Activated CD8-positive, alpha-beta T cell treated with anti-CD3 and anti-CD28 coated beads, Interleukin-2, amount 10 ng/mL, durations not matched to agents 7 days and 5 days (primary cell): ENCODE measurements at regions of chr3 and their contacts with region 1.

Region 1: DNA sequence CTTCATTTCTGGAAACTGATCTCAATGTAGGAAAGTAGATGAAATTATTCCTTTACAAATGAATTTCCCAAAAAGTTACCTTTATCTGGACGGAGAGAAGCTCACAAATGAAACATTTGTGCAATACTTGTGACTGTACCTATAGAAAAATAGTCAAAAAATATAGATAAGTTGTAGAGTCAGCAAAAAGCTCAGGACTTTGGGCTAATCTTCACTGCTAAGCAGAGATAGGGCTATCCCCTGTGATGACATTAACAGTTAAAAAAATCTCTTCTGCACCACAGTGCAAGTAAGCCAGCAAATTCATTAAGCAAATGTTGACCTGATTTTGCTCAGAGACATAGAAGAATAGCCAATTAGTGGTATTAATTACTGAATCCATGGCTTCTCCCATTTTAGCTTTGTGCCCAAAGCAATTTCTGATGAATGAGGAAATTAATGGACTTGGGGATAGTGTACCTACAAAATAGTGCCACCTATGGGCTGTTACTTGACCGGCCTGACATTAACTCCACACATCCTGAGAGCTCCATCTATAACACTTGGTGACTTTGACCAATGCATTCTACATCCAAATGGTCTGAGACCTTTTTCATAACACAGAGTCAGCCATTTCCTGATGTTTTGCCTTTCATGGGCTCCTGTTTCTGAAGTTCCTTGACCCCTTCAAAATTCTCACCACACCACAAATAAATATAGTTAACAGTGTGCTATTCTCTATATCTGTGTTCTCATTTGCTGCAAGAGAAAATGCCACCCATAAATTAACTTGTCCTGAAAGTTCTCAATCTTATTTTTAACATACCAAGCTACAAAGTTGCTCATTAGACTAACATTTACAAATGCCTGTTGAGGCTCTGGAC is 105.0 kb downstream of the SSR3 start:
- DNase-seq: no peak
- ATAC-seq: peak; percentile 67
- H3K4me3 Mint-ChIP-seq: no peak overlapping the region
- H3K27ac Mint-ChIP-seq: no peak overlapping the region
- H3K4me1 Mint-ChIP-seq: peaks cover 2% of the 10 kb centered on the region
- H3K27me3 Mint-ChIP-seq: peaks cover 26% of the 10 kb centered on the region

Region 2: GRCh38 chr3:156151824-156152428 is 298.0 kb before region 1 on chr3:
- CTCF ChIA-PET with region 1: interaction called, 28 read pairs
- POLR2A ChIA-PET with region 1: no interaction called
- DNase-seq: peak; percentile 61
- ATAC-seq: peak; percentile 69
- H3K4me3 Mint-ChIP-seq: no peak overlapping the region
- H3K27ac Mint-ChIP-seq: no peak overlapping the region
- H3K4me1 Mint-ChIP-seq: peaks cover 4% of the 10 kb centered on the region
- H3K27me3 Mint-ChIP-seq: peaks cover 18% of the 10 kb centered on the region

Region 3: GRCh38 chr3:156465194-156465593 is 15.3 kb after region 1 on chr3:
- CTCF ChIA-PET with region 1: interaction called, 14 read pairs
- POLR2A ChIA-PET with region 1: no interaction called
- DNase-seq: no peak
- ATAC-seq: no peak
- H3K4me3 Mint-ChIP-seq: no peak overlapping the region
- H3K27ac Mint-ChIP-seq: no peak overlapping the region
- H3K4me1 Mint-ChIP-seq: no peaks in the 10 kb centered on the region
- H3K27me3 Mint-ChIP-seq: peaks cover 24% of the 10 kb centered on the region

Region 4: DNA sequence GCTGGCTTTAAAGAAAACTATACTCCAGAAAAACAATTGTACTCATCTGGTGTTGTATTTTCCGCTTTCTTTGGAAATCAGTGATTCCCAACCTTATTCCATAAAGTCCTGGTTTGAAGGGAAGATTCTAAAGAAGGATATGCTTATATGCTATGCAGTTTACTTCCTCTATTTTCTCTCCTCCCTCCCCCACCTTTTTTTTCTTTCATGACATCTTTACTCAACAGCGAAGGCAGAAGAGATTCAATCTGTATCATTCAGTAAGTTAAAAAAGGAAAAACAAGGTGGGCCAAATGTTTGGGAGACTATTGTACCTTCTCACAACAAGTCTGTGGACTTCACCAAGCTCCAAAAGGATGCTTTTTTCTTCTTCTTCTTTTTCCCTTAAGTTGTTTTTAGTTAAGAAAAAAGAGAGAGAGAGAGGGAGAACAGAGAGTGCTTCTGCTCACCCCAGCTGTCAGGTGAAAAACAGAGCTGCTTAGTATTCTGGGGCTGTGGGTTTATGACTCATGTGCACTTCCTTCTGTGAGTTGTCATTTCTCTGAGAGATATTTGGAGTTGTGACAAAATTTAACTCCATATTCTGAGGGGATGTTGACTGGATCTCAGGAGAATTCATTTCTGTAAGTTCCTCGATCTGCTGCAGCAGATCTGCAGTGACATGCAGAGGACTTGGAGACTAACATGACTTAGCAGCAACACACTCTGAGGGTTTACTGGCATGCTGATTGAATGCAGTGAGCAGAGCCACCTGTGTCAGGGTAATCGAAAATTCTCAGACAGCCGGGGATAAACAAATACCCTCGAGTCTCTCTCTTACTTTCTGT is 34.2 kb after region 1 on chr3:
- CTCF ChIA-PET with region 1: interaction called, 22 read pairs
- POLR2A ChIA-PET with region 1: no interaction called
- DNase-seq: peak; percentile 69
- ATAC-seq: peak; percentile 92
- H3K4me3 Mint-ChIP-seq: peak overlapping the region; percentile 71
- H3K27ac Mint-ChIP-seq: peak overlapping the region; percentile 87
- H3K4me1 Mint-ChIP-seq: peaks cover 37% of the 10 kb centered on the region
- H3K27me3 Mint-ChIP-seq: peaks cover 1% of the 10 kb centered on the region

Region 5: DNA sequence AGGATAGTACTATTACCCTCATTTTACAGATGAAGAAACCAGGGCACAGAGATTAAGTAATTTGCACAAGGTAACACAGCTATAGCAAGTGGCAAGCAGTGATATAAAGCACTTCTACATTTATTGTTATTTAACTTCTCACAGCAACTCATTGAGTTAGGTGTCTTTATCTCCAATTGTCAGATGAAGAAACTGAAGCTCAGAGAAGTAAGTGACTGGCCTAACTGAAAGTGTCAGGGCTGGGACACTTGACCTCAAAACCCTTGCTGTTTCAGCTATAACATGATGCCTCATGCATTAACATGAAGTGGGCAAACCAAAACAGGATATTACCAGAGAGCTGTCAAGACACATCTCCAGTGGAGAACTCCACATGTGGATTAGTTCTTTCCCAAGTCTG is 310.4 kb after region 1 on chr3:
- CTCF ChIA-PET with region 1: no interaction called
- POLR2A ChIA-PET with region 1: no interaction called
- DNase-seq: peak; percentile 24
- ATAC-seq: no peak
- H3K4me3 Mint-ChIP-seq: no peak overlapping the region
- H3K27ac Mint-ChIP-seq: no peak overlapping the region
- H3K4me1 Mint-ChIP-seq: peaks cover 14% of the 10 kb centered on the region
- H3K27me3 Mint-ChIP-seq: peaks cover 2% of the 10 kb centered on the region